Activated T-helper 1 cell treated with anti-CD3 and anti-CD28 coated beads, Interleukin-12 subunit alpha, Interleukin-12 subunit beta, Interleukin-2, Interleukin-4 antibody, amounts not matched to agents 30 ng/mL and 10 ng/mL and 1 ng/mL, durations not matched to agents 14 hours and 24 hours and 36 hours (primary cell): ENCODE measurements at regions of chr1 and their contacts with region 1.

Region 1: GRCh38 chr1:184754476-184755225 is at the start of gene EDEM3:
- DNase-seq: peak; percentile 97
- H3K4me3 Mint-ChIP-seq: peak within 1 kb of the TSS; percentile 89
- H3K27ac Mint-ChIP-seq: peak within 1 kb of the TSS; percentile 77
- H3K4me1 Mint-ChIP-seq: peaks cover 29% of the 10 kb centered on the region
- H3K27me3 Mint-ChIP-seq: peaks cover 5% of the 10 kb centered on the region
- total RNA-seq, gene EDEM3: 23.8 and 28.5 TPM in 2 replicates

Region 2: GRCh38 chr1:183635606-183636333 is 1118.9 kb before region 1 on chr1 and contains the start of gene ARPC5:
- intact Hi-C with region 1: loop called (anchors 2 kb)
- DNase-seq: peak; percentile 96
- H3K4me3 Mint-ChIP-seq: peak within 1 kb of the TSS; percentile 100
- H3K27ac Mint-ChIP-seq: peak within 1 kb of the TSS; percentile 100
- H3K4me1 Mint-ChIP-seq: peaks cover 46% of the 10 kb centered on the region
- H3K27me3 Mint-ChIP-seq: peaks cover 4% of the 10 kb centered on the region
- total RNA-seq, gene ARPC5: 146 and 154 TPM in 2 replicates

Region 3: GRCh38 chr1:184386312-184387068 is 368.2 kb before region 1 on chr1 and contains the start of gene C1orf21:
- intact Hi-C with region 1: loop called (anchors 5 kb)
- DNase-seq: peak; percentile 75
- H3K4me3 Mint-ChIP-seq: peak within 1 kb of the TSS; percentile 86
- H3K27ac Mint-ChIP-seq: peak within 1 kb of the TSS; percentile 53
- H3K4me1 Mint-ChIP-seq: peaks cover 12% of the 10 kb centered on the region
- H3K27me3 Mint-ChIP-seq: peaks cover 71% of the 10 kb centered on the region
- total RNA-seq, gene C1orf21: 1.8 and 4.1 TPM in 2 replicates

Region 4: DNA sequence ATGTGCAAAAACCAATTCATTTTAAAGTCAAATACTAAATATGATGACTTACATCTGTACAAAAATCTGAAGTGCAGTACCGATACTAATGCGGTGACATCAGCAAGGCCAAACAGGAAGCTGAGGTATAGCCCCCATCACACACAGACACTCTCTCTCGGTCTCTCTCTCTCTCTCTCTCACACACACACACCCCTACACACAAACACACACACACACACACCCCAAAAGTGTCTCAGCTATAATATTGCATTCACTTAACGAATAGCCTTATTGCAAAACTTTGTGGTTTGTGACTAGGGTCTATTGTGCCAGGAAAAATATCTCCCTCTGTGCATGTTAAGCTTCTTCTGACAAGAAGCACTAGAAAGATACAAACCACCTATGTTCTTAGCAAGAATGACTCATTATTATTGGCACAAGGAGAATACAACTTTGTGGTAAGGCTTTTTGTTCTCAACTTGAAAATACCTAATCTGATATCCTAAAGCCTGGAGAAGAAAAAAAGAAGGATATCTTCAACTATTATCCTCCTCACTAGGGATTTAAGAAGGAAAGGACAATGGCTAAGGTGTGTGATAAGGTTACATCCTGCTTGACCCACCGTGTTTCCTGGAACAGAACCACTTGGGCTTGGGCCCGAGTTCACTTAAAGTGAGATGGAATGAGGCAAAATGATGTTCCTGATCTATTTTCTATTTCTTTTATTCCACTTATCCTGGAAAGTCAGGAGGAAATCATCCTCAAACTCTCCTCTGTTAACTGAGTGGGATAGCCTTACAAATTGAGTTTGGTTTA is 112.5 kb after region 1 on chr1:
- intact Hi-C with region 1: loop called (anchors 1 kb)
- DNase-seq: peak; percentile 44
- H3K4me3 Mint-ChIP-seq: peak overlapping the region; percentile 38
- H3K27ac Mint-ChIP-seq: peak overlapping the region; percentile 90
- H3K4me1 Mint-ChIP-seq: peaks cover 40% of the 10 kb centered on the region
- H3K27me3 Mint-ChIP-seq: no peaks in the 10 kb centered on the region

Region 5: GRCh38 chr1:185044981-185045813 is 290.5 kb after region 1 on chr1 and contains the start of gene RNF2:
- intact Hi-C with region 1: loop called (anchors 1 kb)
- DNase-seq: peak; percentile 65
- H3K4me3 Mint-ChIP-seq: peak within 1 kb of the TSS; percentile 89
- H3K27ac Mint-ChIP-seq: peak within 1 kb of the TSS; percentile 82
- H3K4me1 Mint-ChIP-seq: peaks cover 29% of the 10 kb centered on the region
- H3K27me3 Mint-ChIP-seq: peaks cover 15% of the 10 kb centered on the region
- total RNA-seq, gene RNF2: 24.1 and 24.4 TPM in 2 replicates

Region 6: GRCh38 chr1:186304982-186305949 is 1550.6 kb after region 1 on chr1:
- intact Hi-C with region 1: loop called (anchors 5 kb)
- DNase-seq: no peak
- H3K4me3 Mint-ChIP-seq: peak overlapping the region; percentile 48
- H3K27ac Mint-ChIP-seq: peak overlapping the region; percentile 86
- H3K4me1 Mint-ChIP-seq: peaks cover 58% of the 10 kb centered on the region
- H3K27me3 Mint-ChIP-seq: no peaks in the 10 kb centered on the region